ENCODE measurements at regions of chr17 and their contacts with region 1.

Region 1: GRCh38 chr17:39952680-39953470 is 9.9 kb upstream of the GSDMA start:
- DNase-seq: peak; percentile 96
- H3K27ac ChIP-seq: peak overlapping the region; percentile 67
- CTCF ChIP-seq: no peak

Region 2: DNA sequence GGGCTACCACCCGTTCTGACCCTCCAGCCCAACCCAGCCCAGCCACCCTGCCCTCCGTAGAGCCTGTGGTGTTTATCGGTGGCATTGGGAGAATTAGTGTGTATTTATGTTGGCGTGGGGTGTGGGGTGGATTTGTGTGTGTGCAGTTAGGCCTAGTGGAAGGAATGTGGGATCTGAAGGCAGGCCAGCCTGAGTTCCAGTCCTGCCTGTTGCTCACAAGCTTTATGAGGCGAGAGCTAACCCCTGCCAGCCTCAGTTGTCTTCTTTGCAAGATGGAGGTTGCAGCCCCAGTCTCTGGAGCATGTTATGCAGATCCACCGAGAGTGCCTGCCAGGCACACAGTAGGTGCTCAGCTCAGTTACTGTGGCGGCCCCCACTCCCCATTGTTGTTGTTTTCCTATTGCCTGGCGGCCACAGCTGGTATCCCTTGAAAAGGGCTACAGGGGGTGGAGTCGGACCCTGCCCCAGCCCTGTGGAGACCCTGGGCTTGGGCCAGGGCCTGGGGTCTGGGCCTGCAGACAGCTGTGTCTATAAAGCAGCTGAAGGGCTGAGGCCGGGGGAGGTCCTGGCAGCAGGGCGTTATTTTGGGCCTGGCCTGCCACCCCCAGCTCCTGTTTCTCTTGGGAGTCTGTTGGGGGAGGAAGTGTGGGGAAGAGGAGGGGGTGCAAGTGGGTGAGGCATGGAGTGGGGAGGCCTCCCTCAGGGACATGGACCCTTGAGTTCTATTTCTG is 247.9 kb before region 1 on chr17:
- CTCF ChIA-PET with region 1: interaction called, 14 read pairs
- POLR2A ChIA-PET with region 1: no interaction called
- DNase-seq: no peak
- H3K27ac ChIP-seq: peak overlapping the region; percentile 60
- CTCF ChIP-seq: no peak

Region 3: DNA sequence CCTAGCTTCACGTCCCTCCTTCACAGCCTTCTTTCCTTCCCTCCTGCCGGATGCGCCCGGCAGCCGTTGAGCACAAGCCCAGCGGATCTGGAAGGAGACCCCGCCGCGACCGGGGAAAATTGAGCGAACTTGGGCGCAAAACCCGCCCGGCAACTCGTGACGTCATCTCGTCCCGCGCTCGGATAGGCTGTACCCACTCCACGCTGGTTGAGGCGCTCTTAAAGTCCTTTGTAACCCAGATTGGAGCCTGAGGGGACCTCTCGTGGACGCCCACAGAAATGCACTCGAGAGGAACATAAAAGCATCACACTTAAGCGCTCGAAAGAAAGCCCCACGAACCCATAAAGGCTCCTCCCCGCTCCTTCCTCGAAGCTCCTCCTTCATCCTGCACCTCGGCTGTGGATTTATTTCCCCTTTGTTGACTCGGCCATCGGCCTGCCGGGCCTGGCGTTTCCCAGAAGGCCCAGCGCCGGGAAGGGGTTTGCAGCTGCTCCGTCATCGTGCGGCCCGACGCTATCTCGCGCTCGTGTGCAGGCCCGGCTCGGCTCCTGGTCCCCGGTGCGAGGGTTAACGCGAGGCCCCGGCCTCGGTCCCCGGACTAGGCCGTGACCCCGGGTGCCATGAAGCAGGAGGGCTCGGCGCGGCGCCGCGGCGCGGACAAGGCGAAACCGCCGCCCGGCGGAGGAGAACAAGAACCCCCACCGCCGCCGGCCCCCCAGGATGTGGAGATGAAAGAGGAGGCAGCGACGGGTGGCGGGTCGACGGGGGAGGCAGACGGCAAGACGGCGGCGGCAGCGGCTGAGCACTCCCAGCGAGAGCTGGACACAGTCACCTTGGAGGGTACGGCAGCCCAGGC is 27.7 kb after region 1 on chr17 and contains the start of gene PSMD3:
- CTCF ChIA-PET with region 1: interaction called, 25 read pairs
- POLR2A ChIA-PET with region 1: interaction called, 3 read pairs
- DNase-seq: peak; percentile 95
- H3K27ac ChIP-seq: peak within 1 kb of the TSS; percentile 88
- CTCF ChIP-seq: peak; percentile 79

Measured in RWPE1 (cell line).